Vagina (tissue), 2 donors: ENCODE measurements at regions of chr10 and their contacts with region 1.

Region 1: GRCh38 chr10:96089670-96090462 is 40.2 kb upstream of the ZNF518A start:
- DNase-seq: peak in 1 of 2 donors; percentile 88
- H3K4me3 ChIP-seq: peak overlapping the region; percentile 73
- H3K27ac ChIP-seq: peak overlapping the region; percentile 82
- H3K4me1 ChIP-seq: peaks cover 5% of the 10 kb centered on the region
- H3K27me3 ChIP-seq: no peaks in the 10 kb centered on the region
- CTCF ChIP-seq: no peak
- POLR2A ChIP-seq: no peak

Region 2: GRCh38 chr10:95935429-95935828 is 154.4 kb before region 1 on chr10:
- intact Hi-C with region 1: no loop called
- DNase-seq: no peak
- H3K4me3 ChIP-seq: no peak overlapping the region
- H3K27ac ChIP-seq: no peak overlapping the region
- H3K4me1 ChIP-seq: no peaks in the 10 kb centered on the region
- H3K27me3 ChIP-seq: no peaks in the 10 kb centered on the region
- CTCF ChIP-seq: no peak
- POLR2A ChIP-seq: no peak

Region 3: DNA sequence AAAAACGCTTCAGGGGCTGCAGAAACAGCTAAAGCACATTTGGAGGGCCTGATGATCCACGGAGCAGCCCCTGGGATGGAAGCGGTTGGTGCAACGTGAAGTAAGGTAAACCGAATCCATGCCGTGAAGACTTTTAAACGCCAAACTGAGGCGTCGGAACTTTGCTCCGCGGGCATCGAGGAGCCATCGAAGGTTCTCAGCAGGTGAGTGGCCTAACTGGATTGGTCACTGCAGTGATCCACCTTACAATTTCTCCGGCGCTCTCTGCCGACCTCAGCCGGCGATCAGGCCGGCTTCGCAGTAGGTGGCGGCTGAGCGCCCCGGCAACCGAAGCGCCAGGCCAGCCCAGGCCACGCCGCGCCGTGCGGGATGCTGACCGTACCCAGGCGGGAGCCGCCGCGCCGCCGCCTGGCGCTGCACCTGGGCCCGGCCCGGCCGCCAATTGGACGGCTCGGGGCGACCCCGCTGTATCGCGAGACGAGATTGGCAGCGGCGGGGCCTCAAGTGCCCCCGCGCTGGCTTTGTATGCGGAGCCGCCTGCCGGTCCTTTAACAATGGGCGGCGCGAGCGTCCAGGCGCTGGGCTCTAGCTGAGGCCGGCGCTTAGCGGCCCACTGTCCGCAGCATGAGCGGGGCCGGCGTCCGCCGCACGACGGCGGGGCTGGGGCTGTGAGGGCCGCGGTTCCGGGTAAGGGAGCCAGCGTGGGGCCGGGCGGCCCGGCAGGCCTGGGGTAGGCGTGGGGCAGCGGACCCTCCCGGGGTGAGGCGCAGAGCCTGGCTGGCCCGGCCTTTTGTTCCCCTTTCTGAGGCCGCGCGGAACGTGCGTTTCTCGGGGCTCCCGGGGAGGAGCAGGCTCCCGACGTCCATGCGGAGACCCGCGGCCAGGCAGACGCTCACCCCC is 46.6 kb before region 1 on chr10 and contains the start of gene CCNJ:
- intact Hi-C with region 1: loop called (anchors 1 kb)
- DNase-seq: no peak
- H3K4me3 ChIP-seq: peak within 1 kb of the TSS; percentile 78 to 81
- H3K27ac ChIP-seq: peak within 1 kb of the TSS; percentile 88
- H3K4me1 ChIP-seq: peaks cover 20% of the 10 kb centered on the region
- H3K27me3 ChIP-seq: no peaks in the 10 kb centered on the region
- CTCF ChIP-seq: no peak
- POLR2A ChIP-seq: peak in 1 of 2 donors; percentile 55
- total RNA-seq, gene CCNJ: 6.9 TPM

Region 4: DNA sequence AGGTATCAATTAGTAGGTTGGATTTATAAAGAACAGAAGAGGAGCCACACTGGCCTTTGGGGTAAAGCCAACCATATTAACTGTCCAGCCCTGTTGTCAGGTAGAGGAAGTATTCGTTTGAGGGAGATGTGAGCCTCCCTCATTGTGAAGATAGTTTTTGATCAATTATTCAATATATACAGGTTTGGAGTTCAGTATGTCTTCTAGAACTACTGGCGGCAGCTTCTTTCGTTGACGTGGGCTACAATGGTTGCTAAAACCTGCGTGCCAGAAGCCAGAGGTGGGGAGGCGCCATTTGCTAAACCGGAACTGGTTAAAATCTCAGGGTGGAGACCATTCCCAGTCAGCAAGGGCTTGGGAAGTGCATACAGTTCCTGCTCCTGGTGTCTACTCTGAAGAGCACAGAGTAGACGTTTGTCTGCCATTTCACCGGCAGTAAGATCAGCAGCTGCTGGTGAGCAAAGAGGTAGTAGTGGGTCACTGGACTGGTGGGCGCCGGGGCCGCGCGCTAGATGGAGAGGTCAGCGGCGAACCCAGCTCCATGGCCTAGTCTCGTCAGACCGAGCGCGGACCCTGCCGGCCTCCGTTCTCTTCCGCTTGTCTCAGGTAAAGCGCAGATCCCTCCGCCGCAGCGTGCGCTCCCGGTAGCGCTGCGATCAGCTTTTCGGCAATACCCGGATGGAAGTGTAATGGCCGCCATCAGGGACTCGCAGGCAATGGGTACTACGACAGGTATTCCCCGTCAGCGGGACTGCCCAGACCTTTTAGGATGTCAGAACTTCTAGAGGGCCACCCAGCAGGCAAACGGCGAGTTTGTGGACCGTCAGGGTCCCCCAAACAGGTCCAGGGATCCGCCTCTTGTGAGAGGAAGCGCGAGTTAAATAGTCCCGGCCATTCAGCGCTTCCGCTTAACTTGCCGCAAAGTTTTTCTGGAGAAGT is 39.8 kb after region 1 on chr10 and contains the start of gene ZNF518A:
- intact Hi-C with region 1: loop called (anchors 2 kb)
- DNase-seq: peak in 1 of 2 donors; percentile 91
- H3K4me3 ChIP-seq: peak within 1 kb of the TSS; percentile 75 to 77
- H3K27ac ChIP-seq: peak within 1 kb of the TSS; percentile 89
- H3K4me1 ChIP-seq: peaks cover 13% of the 10 kb centered on the region
- H3K27me3 ChIP-seq: no peaks in the 10 kb centered on the region
- CTCF ChIP-seq: no peak
- POLR2A ChIP-seq: no peak
- total RNA-seq, gene ZNF518A: 12.5 TPM